ENCODE measurements at regions of chr6 and their contacts with region 1.

Region 1: DNA sequence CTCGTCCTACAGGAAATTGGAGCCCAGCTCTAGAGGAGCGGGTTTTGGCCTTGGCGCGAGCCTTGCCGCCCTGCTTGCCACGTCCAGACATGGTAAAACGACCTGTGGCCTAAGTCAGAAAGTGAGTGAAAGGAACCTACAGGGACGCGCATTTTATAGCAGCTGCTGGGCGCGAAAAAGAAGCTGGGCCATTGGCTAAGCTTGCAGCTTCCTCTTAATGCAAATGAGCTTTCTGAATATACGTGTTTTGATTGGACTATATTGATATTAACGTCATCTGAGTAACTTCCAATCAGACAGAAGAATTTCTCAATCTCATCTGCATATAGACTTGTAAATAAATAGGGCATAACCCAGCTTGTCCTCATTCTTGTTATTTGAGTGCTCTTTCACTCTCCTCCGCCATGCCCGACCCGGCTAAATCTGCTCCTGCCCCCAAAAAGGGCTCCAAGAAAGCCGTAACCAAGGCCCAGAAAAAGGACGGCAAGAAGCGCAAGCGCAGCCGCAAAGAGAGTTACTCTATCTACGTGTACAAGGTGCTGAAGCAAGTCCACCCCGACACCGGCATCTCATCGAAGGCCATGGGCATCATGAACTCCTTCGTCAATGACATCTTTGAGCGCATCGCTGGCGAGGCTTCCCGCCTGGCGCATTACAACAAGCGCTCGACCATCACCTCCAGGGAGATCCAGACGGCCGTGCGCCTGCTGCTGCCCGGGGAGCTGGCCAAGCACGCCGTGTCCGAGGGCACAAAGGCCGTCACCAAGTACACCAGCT is 18.9 kb downstream of the OR2B2 start:
- DNase-seq: peak; percentile 98
- H3K4me3 ChIP-seq: peak overlapping the region; percentile 65 to 98 (median 86)
- H3K27ac ChIP-seq: peak overlapping the region; percentile 94
- H3K4me1 ChIP-seq: peaks cover 22% of the 10 kb centered on the region
- H3K27me3 ChIP-seq: no peaks in the 10 kb centered on the region
- CTCF ChIP-seq: no peak
- POLR2A ChIP-seq: peak; percentile 96

Region 2: DNA sequence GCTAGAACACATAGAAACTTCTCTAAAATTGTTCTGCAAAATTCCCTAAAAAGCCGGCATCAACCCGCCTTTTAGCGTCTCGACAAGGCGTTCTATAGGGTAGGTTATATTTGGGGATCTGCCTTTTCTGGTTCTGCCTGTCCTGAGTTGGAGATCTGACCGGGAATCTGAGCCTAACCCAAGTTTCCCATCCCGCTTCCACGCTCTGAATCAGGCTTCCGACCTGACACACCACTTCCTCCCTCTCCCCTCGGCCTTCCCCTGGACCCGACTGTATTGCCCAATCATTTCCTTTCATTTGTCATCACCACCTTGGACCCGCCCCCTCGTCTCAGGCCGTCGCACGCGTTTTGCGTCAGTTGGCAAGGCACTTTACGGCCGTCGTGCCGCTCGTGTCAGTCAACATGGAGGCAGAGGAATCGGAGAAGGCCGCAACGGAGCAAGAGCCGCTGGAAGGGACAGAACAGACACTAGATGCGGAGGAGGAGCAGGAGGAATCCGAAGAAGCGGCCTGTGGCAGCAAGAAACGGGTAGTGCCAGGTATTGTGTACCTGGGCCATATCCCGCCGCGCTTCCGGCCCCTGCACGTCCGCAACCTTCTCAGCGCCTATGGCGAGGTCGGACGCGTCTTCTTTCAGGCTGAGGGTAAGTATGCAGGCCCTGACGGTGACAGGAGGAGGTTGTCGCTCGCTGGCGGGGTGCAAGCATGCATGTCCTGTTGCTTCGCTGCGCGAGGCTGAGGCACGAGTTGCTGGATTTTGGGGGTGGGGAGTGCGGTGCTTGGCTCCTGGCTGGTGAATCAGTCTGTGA is 1296.5 kb before region 1 on chr6 and contains the start of gene ABT1:
- CTCF ChIA-PET with region 1: interaction called, 5 read pairs
- POLR2A ChIA-PET with region 1: no interaction called
- dilution Hi-C with region 1: no loop called
- intact Hi-C with region 1: loop called (anchors 5 kb)
- DNase-seq: peak; percentile 99
- H3K4me3 ChIP-seq: peak within 1 kb of the TSS; percentile 30 to 87 (median 69)
- H3K27ac ChIP-seq: peak within 1 kb of the TSS; percentile 80
- H3K4me1 ChIP-seq: peaks cover 18% of the 10 kb centered on the region
- H3K27me3 ChIP-seq: peaks cover 8 to 11% of the 10 kb centered on the region in 2 experiments
- CTCF ChIP-seq: no peak
- POLR2A ChIP-seq: peak; percentile 80
- total RNA-seq, gene ABT1: 18.5 and 20.1 TPM in 2 replicates

Region 3: DNA sequence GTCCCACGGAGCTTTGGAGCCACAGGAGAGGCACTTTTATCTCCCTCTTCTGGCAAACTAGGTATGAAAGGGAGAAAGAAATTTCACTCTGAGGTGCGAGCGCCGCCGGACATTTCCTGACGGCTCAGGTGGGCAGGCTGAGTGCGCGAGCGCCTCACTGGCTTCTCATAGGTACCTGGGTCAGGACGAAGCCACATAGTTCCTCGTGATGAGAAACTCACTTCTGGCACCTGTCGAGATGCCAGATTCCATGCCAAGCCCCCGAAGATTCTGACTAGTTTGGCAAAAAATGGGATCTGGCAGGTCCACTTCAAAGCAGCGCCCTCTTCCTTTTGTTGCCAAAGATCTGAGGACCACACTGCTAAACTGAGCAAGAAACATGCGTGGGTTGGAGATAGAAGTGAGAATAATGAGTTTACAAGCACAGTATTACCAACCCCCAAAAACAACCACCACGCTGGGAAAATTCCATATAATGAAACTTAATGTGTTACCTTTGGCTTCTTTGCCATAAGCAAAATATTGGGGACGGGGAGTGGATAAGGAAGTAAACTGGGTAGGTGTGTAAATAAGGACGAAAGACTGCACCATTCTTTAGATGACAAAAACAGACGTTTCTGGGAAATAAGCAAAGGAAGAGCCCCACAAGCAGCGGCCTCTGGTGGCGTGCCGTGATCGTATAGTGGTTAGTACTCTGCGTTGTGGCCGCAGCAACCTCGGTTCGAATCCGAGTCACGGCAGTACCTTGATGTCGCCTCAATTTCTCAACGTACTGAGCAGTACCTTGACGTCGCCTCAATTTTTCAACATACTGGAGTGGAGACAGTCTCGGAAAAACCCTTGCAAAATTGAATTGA is 735.6 kb before region 1 on chr6:
- CTCF ChIA-PET with region 1: interaction called, 23 read pairs
- POLR2A ChIA-PET with region 1: no interaction called
- dilution Hi-C with region 1: no loop called
- intact Hi-C with region 1: no loop called
- DNase-seq: peak; percentile 57
- H3K4me3 ChIP-seq: peak overlapping the region; percentile 30 to 64 (median 59)
- H3K27ac ChIP-seq: no peak overlapping the region
- H3K4me1 ChIP-seq: peaks cover 10% of the 10 kb centered on the region
- H3K27me3 ChIP-seq: peaks cover 8 to 11% of the 10 kb centered on the region in 2 experiments
- CTCF ChIP-seq: peak; percentile 42 to 63
- POLR2A ChIP-seq: no peak

Region 4: GRCh38 chr6:27495386-27496135 is 397.7 kb before region 1 on chr6:
- CTCF ChIA-PET with region 1: no interaction called
- POLR2A ChIA-PET with region 1: no interaction called
- dilution Hi-C with region 1: no loop called
- intact Hi-C with region 1: no loop called
- DNase-seq: peak; percentile 58
- H3K4me3 ChIP-seq: peak overlapping the region; percentile 44 to 84 (median 82)
- H3K27ac ChIP-seq: no peak overlapping the region
- H3K4me1 ChIP-seq: peaks cover 7% of the 10 kb centered on the region
- H3K27me3 ChIP-seq: peaks cover 11 to 23% of the 10 kb centered on the region in 2 experiments
- CTCF ChIP-seq: peak in 1 of 2 donors; percentile 5
- POLR2A ChIP-seq: no peak

Region 5: DNA sequence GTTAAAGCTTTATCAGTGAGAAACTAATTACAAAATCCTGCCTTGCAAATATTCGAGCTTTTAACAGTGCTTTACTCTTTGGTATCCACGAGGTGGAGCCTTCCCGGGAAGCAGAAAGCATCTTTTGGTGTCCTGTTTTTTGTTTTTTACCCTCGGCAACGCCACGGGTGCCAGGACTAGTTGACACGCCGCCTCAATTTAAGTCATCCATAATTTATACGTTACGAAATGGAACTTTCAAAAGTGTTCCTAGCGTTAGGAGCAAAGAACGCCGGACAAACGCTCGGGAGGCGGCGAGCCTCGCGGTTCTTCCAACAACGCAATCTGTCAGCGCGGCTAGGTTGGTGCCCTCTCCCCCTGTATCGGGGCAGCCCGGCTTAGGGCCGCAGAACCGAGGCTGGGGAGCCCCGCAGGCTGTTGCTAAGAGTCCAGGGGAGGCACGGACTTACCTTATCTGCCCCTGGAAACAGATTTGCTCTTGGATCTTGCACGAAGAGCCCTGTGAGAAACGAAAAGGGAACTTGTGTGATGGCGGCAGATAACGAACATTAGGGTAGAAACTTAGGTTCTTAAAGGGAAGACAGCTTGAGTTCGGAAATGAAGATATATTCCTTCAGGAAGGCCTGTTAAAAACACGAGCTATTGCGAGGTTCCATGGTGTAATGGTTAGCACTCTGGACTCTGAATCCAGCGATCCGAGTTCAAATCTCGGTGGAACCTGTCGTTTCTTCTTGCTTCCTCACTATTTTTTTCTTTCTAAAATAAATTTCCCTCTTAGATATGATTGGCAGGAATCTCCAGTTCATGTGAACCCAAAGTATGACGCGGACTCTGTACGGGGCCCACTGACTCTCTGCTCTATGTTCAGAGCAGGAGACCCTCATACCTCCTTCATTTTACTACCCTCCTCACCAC is 374.1 kb before region 1 on chr6:
- CTCF ChIA-PET with region 1: interaction called, 47 read pairs
- POLR2A ChIA-PET with region 1: no interaction called
- dilution Hi-C with region 1: no loop called
- intact Hi-C with region 1: loop called (anchors 1 kb)
- DNase-seq: peak; percentile 93
- H3K4me3 ChIP-seq: peak overlapping the region; percentile 47 to 74 (median 61)
- H3K27ac ChIP-seq: peak overlapping the region; percentile 27
- H3K4me1 ChIP-seq: peaks cover 3% of the 10 kb centered on the region
- H3K27me3 ChIP-seq: peaks cover 19 to 30% of the 10 kb centered on the region in 2 experiments
- CTCF ChIP-seq: peak; percentile 57 to 63
- POLR2A ChIP-seq: no peak

Region 6: DNA sequence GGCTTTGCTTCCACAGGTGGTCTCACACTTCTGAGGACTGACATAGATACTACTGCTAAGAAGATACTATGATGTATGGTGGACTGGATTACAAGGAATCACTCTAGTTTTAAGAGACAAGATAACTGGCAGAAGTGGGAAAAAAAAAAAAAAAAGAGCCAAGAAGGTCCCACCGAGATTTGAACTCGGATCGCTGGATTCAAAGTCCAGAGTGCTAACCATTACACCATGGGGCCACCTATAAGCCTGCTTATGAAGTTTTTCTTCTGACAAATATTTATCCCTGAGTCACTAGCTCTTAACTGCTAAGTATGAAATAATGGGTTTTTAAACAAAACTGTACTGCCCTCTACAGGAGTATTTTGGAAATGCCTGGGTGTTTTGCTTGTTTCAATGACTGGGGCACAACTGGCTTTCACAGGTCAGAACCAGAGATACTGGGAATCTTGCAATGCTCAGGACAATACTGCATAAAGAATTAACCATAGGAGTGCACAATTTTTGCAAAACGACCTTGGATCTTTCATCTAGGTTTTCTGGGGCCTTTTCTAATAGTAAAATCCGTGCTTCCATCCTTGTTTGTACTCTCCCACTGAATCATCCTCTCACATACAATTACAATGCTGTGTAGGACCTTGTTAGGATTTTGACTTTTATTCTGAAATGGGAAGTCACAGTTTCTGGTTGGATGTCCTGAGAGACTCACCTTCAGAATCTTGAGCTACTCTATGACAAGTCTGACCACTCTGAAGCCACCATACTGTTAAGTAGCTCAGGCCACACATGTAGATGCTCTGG is 97.4 kb before region 1 on chr6:
- CTCF ChIA-PET with region 1: interaction called, 104 read pairs
- POLR2A ChIA-PET with region 1: interaction called, 3 read pairs
- dilution Hi-C with region 1: no loop called
- intact Hi-C with region 1: loop called (anchors 1 kb)
- DNase-seq: peak; percentile 95
- H3K4me3 ChIP-seq: no peak overlapping the region
- H3K27ac ChIP-seq: no peak overlapping the region
- H3K4me1 ChIP-seq: peaks cover 7% of the 10 kb centered on the region
- H3K27me3 ChIP-seq: no peaks in the 10 kb centered on the region
- CTCF ChIP-seq: peak; percentile 60 to 69
- POLR2A ChIP-seq: no peak

Region 7: GRCh38 chr6:27864906-27865849 is 28.1 kb before region 1 on chr6:
- CTCF ChIA-PET with region 1: interaction called, 37 read pairs
- POLR2A ChIA-PET with region 1: interaction called, 130 read pairs
- dilution Hi-C with region 1: no loop called
- intact Hi-C with region 1: no loop called
- DNase-seq: peak; percentile 98
- H3K4me3 ChIP-seq: peak overlapping the region; percentile 60 to 71 (median 66)
- H3K27ac ChIP-seq: peak overlapping the region; percentile 82
- H3K4me1 ChIP-seq: peaks cover 10% of the 10 kb centered on the region
- H3K27me3 ChIP-seq: no peaks in the 10 kb centered on the region
- CTCF ChIP-seq: no peak
- POLR2A ChIP-seq: peak; percentile 77

Region 8: DNA sequence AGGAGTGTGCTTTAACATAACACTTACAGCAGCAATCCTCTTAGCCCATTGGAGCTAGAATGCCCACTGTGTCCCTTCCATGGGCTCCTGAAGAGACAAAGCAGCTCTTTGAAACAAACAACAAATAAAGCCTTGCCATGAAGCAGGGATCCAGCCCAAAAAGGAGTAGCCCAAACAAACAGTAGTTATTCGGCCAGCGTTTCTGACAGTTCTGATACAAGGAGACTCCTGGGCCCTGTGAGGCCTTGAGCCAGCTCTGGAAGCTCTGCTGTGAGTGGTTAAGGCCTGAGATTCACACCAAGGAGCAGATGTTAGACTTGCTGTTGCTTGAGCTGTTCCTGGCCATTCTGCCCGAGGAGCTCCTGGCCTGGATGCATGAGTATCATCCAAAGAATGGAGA is 214.3 kb after region 1 on chr6:
- CTCF ChIA-PET with region 1: no interaction called
- POLR2A ChIA-PET with region 1: no interaction called
- dilution Hi-C with region 1: no loop called
- intact Hi-C with region 1: no loop called
- DNase-seq: no peak
- H3K4me3 ChIP-seq: no peak overlapping the region
- H3K27ac ChIP-seq: no peak overlapping the region
- H3K4me1 ChIP-seq: peaks cover 6% of the 10 kb centered on the region
- H3K27me3 ChIP-seq: peaks cover 2 to 5% of the 10 kb centered on the region in 2 experiments
- CTCF ChIP-seq: no peak
- POLR2A ChIP-seq: no peak

Region 9: DNA sequence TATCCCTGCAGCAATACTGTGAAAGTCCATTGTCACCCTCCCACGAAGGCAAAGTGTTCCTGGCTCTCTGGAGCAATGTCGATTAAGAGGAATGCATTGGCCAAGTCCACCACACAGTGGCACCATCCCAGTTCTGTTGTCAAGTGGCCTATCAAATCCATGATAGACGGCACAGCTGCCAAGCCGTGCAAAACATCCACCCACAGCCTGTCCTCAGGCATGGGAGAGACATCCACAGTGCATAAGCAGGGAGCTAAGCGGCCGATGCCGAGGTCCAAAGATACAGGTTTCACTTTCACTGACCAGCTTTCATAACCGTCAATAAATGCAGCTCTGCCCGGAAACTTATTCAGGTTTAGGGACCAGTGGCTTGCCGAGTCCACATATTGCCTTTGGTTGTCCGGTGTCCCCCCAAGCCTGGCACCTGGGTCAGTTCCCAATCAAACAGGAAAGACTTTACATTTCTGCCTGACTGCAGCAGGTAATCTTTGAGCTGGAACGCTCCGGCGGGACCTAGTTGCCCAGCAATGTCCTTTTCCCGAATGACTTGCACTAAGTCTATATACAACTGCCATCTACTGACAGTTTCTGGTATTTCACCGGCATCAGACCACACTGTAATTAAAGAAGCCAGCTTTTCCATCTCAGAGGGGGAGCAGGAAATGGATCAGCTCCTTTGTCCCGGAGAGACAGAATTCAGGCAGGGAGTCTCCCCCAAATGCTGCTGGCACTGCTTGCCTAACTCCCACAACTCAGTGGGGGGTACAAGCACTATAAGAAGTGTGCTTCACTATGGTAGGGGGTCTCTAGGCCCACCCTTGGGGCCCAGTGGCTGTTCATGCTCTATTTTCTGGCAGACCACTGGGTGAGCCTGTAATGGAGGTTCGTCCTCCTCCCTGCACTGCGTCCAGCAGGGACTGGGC is 462.8 kb after region 1 on chr6:
- CTCF ChIA-PET with region 1: interaction called, 49 read pairs
- POLR2A ChIA-PET with region 1: interaction called, 6 read pairs
- dilution Hi-C with region 1: no loop called
- intact Hi-C with region 1: loop called (anchors 1 kb)
- DNase-seq: peak; percentile 93
- H3K4me3 ChIP-seq: peak overlapping the region; percentile 52 to 84 (median 55)
- H3K27ac ChIP-seq: peak overlapping the region; percentile 60
- H3K4me1 ChIP-seq: peaks cover 36% of the 10 kb centered on the region
- H3K27me3 ChIP-seq: no peaks in the 10 kb centered on the region
- CTCF ChIP-seq: peak; percentile 66 to 73
- POLR2A ChIP-seq: peak; percentile 40

Measured in endothelial cell of umbilical vein (primary cell).